Heart left ventricle (tissue), 16 donors: ENCODE measurements at regions of chr1 and their contacts with region 1.

Region 1: DNA sequence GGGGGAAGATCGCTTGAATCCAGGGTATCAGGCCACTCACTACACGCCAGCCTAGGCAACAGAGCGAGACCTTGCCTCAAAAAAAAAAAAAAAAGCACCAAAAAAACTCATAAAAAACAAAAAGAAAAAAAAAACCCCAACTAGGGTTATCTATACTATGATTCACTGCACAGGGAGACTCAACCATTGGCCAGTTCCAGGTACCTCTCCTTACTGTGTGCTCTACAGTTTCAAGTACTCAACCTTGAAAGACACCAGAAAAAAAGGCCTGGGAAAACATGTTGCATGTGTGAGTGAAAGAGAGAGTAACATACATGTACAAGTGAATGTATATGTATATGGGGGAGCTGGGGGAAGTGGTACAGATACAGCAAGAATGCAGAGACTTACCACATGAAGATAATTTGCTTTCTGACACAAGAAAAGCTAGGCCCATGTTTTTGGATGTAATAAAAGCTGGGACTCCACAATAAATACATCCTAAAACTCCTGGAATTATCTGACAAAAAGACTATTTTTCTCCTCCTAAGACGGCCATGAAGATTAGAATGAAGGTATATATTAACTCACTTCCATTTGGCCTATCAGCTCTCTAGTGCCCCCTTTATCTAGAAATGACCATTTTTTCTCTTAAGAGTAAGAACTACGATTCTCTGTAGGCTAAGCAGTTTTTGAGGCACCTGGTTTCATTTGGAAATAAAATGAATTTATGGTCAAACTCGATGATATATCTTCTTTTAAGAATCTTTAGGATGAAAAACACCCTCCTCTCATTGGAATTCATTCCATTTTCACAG is 52.2 kb downstream of the SLC27A3 start:
- DNase-seq: no peak
- ATAC-seq: no peak
- H3K4me3 ChIP-seq: no peak overlapping the region
- H3K27ac ChIP-seq: no peak overlapping the region
- H3K4me1 ChIP-seq: peaks cover 0 to 17% (median 6%) of the 10 kb centered on the region in 12 donors
- H3K27me3 ChIP-seq: no peaks in the 10 kb centered on the region
- CTCF ChIP-seq: no peak
- POLR2A ChIP-seq: no peak

Region 2: DNA sequence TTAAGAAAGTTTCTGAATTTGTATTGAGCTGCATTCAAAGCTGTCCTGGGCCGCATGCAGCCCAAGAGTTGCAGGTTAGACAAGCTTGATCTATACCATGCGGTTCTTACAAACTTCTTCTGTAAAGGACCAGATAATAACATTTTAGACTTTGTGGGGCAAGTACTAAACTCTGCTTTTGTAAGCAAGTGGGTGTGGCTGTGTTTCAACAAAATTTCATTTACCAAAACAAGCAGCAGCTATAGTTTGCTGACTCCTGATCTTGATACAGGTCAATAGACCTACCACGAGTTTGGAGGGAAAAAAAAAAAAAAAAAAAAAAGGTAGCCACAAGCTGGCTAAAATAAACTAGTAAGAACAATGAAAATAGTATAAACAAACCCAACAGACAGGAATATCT is 48.0 kb after region 1 on chr1:
- intact Hi-C with region 1: loop called in 1 of 10 experiments (anchors 5 kb)
- DNase-seq: no peak
- ATAC-seq: no peak
- H3K4me3 ChIP-seq: no peak overlapping the region
- H3K27ac ChIP-seq: no peak overlapping the region
- H3K4me1 ChIP-seq: peaks cover 0 to 29% (median 5%) of the 10 kb centered on the region in 12 donors
- H3K27me3 ChIP-seq: no peaks in the 10 kb centered on the region
- CTCF ChIP-seq: no peak
- POLR2A ChIP-seq: no peak

Region 3: GRCh38 chr1:153888533-153888932 is 61.2 kb after region 1 on chr1:
- intact Hi-C with region 1: loop called in 1 of 10 experiments (anchors 5 kb)
- DNase-seq: no peak
- ATAC-seq: no peak
- H3K4me3 ChIP-seq: no peak overlapping the region
- H3K27ac ChIP-seq: peak overlapping the region in 2 of 12 donors; percentile 26 to 70
- H3K4me1 ChIP-seq: peaks cover 0 to 29% (median 13%) of the 10 kb centered on the region in 12 donors
- H3K27me3 ChIP-seq: no peaks in the 10 kb centered on the region
- CTCF ChIP-seq: no peak
- POLR2A ChIP-seq: no peak

Region 4: GRCh38 chr1:153903841-153904455 is 76.6 kb after region 1 on chr1:
- intact Hi-C with region 1: loop called in 1 of 10 experiments (anchors 10 kb)
- DNase-seq: no peak
- ATAC-seq: no peak
- H3K4me3 ChIP-seq: no peak overlapping the region
- H3K27ac ChIP-seq: no peak overlapping the region
- H3K4me1 ChIP-seq: peaks cover 0 to 25% (median 5%) of the 10 kb centered on the region in 12 donors
- H3K27me3 ChIP-seq: no peaks in the 10 kb centered on the region
- CTCF ChIP-seq: no peak
- POLR2A ChIP-seq: no peak

Region 5: GRCh38 chr1:153922972-153923925 is 95.9 kb after region 1 on chr1 and contains the start of gene GATAD2B:
- intact Hi-C with region 1: loop called in 7 of 10 experiments (anchors 5 to 10 kb)
- DNase-seq: peak; percentile 100
- ATAC-seq: peak; percentile 98
- H3K4me3 ChIP-seq: peak within 1 kb of the TSS; percentile 53 to 89 (median 78)
- H3K27ac ChIP-seq: peak within 1 kb of the TSS; percentile 76 to 97 (median 90)
- H3K4me1 ChIP-seq: peaks cover 2 to 45% (median 36%) of the 10 kb centered on the region in 12 donors
- H3K27me3 ChIP-seq: no peaks in the 10 kb centered on the region
- CTCF ChIP-seq: no peak
- POLR2A ChIP-seq: peak in 1 of 2 donors; percentile 43
- total RNA-seq, gene GATAD2B: 18.1 to 53.9 (median 46.2) TPM